CD8-positive, alpha-beta T cell (primary cell): ENCODE measurements at regions of chr12 and their contacts with region 1.

Region 1: DNA sequence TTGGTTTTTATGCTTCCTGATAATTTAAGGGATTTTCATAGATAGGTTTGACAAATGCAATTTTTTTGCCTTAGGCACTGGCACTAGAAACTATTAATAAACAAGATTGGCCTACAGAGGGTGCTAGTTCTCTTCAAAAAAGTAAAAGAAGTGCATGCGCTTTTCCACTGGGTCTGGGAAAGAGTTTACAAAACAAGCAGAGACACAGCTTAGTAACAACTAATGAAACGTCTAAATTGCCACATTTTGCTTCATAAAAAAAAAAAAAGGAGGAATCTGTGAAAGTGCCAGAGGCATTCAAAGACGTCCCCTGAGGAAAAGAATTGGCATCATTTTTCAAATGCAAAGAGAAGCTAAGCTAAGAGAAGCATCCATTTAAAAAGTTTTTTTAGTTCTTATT is 58.3 kb upstream of the EEA1 start:
- DNase-seq: peak in 2 of 9 experiments; percentile 60 to 69
- ATAC-seq: peak; percentile 63
- H3K4me3 ChIP-seq: no peak overlapping the region
- H3K4me3 Mint-ChIP-seq: no peak overlapping the region
- H3K27ac ChIP-seq: no peak overlapping the region
- H3K27ac Mint-ChIP-seq: no peak overlapping the region
- H3K4me1 ChIP-seq: no peaks in the 10 kb centered on the region
- H3K4me1 Mint-ChIP-seq: peaks cover 9% of the 10 kb centered on the region
- H3K27me3 ChIP-seq: no peaks in the 10 kb centered on the region
- H3K27me3 Mint-ChIP-seq: no peaks in the 10 kb centered on the region
- CTCF ChIP-seq: peak; percentile 62

Region 2: GRCh38 chr12:92784795-92785562 is 202.4 kb before region 1 on chr12:
- CTCF ChIA-PET with region 1: interaction called, 45 read pairs
- POLR2A ChIA-PET with region 1: no interaction called
- intact Hi-C with region 1: loop called (anchors 1 kb)
- DNase-seq: peak in 3 of 9 experiments; percentile 28 to 77 (median 68)
- ATAC-seq: peak; percentile 99
- H3K4me3 ChIP-seq: no peak overlapping the region
- H3K4me3 Mint-ChIP-seq: no peak overlapping the region
- H3K27ac ChIP-seq: no peak overlapping the region
- H3K27ac Mint-ChIP-seq: no peak overlapping the region
- H3K4me1 ChIP-seq: no peaks in the 10 kb centered on the region
- H3K4me1 Mint-ChIP-seq: peaks cover 11% of the 10 kb centered on the region
- H3K27me3 ChIP-seq: no peaks in the 10 kb centered on the region
- H3K27me3 Mint-ChIP-seq: no peaks in the 10 kb centered on the region
- CTCF ChIP-seq: peak; percentile 61

Region 3: GRCh38 chr12:92977326-92977725 is 10.0 kb before region 1 on chr12:
- CTCF ChIA-PET with region 1: interaction called, 15 read pairs
- POLR2A ChIA-PET with region 1: no interaction called
- intact Hi-C with region 1: no loop called
- DNase-seq: peak in 1 of 9 experiments; percentile 8
- ATAC-seq: peak; percentile 54
- H3K4me3 ChIP-seq: no peak overlapping the region
- H3K4me3 Mint-ChIP-seq: peak overlapping the region; percentile 54
- H3K27ac ChIP-seq: no peak overlapping the region
- H3K27ac Mint-ChIP-seq: peak overlapping the region; percentile 60
- H3K4me1 ChIP-seq: no peaks in the 10 kb centered on the region
- H3K4me1 Mint-ChIP-seq: peaks cover 10% of the 10 kb centered on the region
- H3K27me3 ChIP-seq: no peaks in the 10 kb centered on the region
- H3K27me3 Mint-ChIP-seq: peaks cover 9% of the 10 kb centered on the region
- CTCF ChIP-seq: no peak

Region 4: DNA sequence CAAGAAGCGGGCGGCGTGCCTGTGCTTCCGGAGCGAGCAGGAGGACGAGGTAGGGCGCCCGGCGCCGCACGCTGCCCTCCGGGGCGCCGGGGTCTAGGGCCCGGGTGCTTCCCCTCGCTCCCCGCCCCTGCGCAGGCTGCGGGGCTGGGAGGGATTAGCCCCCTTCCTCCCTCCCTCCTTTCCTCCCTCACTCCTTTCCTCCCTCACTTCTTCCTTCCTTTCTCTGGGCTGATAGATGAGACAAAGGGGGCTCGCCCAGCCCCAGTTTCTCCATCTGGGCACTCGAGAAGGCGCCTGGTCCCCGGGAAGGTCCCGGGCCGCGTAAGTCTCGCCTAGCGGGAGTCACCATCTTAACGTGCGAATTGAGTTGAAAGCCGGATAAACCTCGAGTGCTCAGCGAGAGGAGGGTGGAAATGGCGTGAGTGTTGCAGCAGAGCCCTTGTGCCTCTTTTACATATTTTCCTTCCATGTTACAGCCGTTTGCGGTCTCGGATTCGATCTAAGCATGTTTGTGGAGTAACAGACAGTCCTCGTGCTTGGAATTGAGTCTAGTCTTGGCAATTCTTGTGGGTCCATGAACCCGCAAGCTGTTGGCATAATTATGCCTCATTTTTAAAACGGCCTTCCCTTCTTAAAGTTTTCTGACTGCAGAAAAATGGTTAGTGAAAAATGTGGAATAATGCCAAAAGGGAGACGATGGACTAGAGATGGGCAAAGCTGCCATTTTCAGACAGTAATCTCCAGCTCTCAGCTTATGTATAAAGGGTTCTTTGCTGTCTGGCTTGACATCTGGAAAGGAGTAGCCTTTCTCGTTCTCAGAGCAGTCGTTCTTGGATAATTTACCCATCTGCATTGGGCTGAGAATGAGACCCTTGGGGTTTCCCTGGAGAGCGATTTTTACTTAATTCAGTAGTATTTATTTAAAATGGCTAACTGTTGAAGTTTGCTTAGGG is 391.3 kb after region 1 on chr12:
- CTCF ChIA-PET with region 1: interaction called, 23 read pairs
- POLR2A ChIA-PET with region 1: no interaction called
- intact Hi-C with region 1: no loop called
- DNase-seq: peak; percentile 18 to 85 (median 57)
- ATAC-seq: peak; percentile 54
- H3K4me3 ChIP-seq: peak overlapping the region; percentile 72 to 87
- H3K4me3 Mint-ChIP-seq: peak overlapping the region; percentile 99
- H3K27ac ChIP-seq: peak overlapping the region; percentile 77 to 81
- H3K27ac Mint-ChIP-seq: peak overlapping the region; percentile 99
- H3K4me1 ChIP-seq: peaks cover 23% of the 10 kb centered on the region
- H3K4me1 Mint-ChIP-seq: peaks cover 44% of the 10 kb centered on the region
- H3K27me3 ChIP-seq: no peaks in the 10 kb centered on the region
- H3K27me3 Mint-ChIP-seq: no peaks in the 10 kb centered on the region
- CTCF ChIP-seq: no peak

Region 5: DNA sequence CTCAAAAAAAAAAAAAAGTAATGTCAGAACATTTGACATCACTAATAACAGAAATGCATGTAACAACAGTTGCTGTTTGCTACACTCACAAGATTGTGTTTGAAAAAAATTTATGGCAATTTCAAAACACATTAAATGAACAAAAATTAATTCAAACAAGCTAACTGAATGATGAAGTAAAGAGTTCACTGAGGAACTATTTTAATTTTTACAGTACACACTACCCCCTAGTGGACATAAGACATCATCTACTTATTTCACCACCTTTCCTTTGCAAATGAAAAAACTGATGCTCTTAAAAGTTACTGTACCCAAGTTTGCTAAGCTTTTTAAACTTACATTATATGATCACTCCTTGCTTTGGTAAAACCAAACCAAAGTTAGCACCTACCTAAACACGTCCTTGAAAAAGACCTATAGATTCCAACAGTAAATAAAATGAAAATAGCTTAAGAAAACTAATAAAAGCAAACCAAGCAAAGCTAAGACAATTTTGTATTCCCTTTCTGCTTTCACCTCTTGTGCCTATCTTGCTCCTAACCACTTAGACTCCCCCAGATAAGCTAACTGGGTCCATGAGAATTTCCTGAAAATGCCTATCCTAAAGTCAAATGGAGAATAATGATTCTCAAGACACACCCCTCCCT is 432.1 kb after region 1 on chr12:
- CTCF ChIA-PET with region 1: interaction called, 45 read pairs
- POLR2A ChIA-PET with region 1: no interaction called
- intact Hi-C with region 1: loop called (anchors 1 kb)
- DNase-seq: peak in 2 of 9 experiments; percentile 60 to 73
- ATAC-seq: peak; percentile 78
- H3K4me3 ChIP-seq: no peak overlapping the region
- H3K4me3 Mint-ChIP-seq: no peak overlapping the region
- H3K27ac ChIP-seq: peak overlapping the region in 1 of 2 experiments; percentile 19
- H3K27ac Mint-ChIP-seq: peak overlapping the region; percentile 38
- H3K4me1 ChIP-seq: peaks cover 40% of the 10 kb centered on the region
- H3K4me1 Mint-ChIP-seq: peaks cover 87% of the 10 kb centered on the region
- H3K27me3 ChIP-seq: no peaks in the 10 kb centered on the region
- H3K27me3 Mint-ChIP-seq: no peaks in the 10 kb centered on the region
- CTCF ChIP-seq: peak; percentile 69

Region 6: DNA sequence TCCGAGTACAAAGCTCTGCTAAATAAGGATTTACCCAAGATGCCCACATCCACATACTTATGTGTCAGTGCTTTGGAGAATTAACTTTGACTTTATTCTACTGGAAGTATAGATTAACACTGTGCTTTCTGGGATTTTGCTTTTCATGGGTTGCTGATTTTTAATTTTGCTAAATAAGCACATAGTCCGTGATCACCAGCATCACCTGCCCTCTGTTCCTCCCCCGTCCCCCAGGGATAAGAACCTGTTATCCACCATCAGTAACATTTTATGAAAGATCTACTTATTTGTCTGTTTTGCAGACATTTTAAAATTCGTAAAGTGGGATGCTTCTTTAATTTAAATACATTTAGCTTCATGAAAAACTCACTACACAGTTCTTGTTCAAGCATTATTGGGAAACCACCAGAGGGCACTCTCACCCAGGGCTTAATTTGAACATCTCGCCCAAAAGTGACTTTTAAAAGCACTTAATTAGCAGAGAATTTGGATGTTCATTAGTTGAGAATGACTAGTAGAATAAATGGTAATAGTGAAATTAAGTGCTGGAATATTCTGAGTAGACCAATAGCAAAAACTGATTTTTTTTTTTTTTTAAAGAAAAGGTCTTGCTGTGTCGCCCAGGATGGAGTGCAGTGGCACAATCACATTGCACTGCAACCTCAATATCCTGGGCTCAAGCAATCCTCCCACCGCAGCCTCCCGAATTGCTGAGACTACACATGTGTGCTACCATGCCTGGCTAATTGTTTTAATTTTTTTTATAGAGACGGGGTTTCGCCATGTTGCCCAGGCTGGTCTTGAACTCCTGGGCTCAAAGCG is 515.7 kb after region 1 on chr12:
- CTCF ChIA-PET with region 1: interaction called, 4 read pairs
- POLR2A ChIA-PET with region 1: no interaction called
- intact Hi-C with region 1: loop called (anchors 10 kb)
- DNase-seq: peak; percentile 34 to 72 (median 64)
- ATAC-seq: peak; percentile 36
- H3K4me3 ChIP-seq: no peak overlapping the region
- H3K4me3 Mint-ChIP-seq: no peak overlapping the region
- H3K27ac ChIP-seq: no peak overlapping the region
- H3K27ac Mint-ChIP-seq: no peak overlapping the region
- H3K4me1 ChIP-seq: no peaks in the 10 kb centered on the region
- H3K4me1 Mint-ChIP-seq: no peaks in the 10 kb centered on the region
- H3K27me3 ChIP-seq: no peaks in the 10 kb centered on the region
- H3K27me3 Mint-ChIP-seq: no peaks in the 10 kb centered on the region
- CTCF ChIP-seq: peak; percentile 95